Sigmoid colon (tissue), 7 donors: ENCODE measurements at regions of chr1 and their contacts with region 1.

Region 1: DNA sequence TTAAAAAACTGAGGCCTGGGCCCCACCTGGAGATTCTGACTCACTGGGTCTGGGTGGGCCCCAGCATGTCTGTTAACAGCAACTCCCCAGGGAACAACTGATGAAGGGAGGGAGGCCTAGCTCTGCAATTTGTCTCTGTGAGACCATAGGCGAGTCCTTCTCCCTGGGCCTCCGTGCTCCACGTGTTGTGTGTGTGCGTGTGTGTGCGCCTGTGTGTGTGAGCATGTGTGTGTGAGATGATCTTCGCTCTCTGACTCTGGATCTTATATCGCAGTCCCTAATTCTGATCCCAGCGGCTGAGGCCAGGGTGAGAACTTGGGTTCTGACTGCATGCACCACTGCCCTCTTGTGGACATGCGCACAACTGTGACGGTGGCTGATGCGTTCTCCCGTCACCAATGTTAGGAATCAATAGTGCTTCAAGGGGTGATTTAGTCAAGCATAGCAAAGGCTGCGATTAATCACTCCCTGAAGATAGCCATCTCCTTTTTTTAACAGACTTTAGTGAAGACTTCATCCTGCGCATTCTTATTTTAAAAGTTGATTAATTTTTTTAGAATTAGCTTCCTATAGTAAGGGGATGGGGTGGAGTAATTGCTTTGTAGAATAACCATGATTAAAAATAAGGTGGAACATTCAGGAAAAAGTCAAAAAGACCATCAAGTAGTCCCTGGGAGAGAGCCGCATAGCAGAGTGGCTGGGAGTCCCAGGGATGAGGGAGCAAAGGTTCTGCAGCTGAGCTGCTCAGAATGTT is 62.4 kb upstream of the USP24 start:
- DNase-seq: peak; percentile 90
- H3K4me3 ChIP-seq: no peak overlapping the region
- H3K27ac ChIP-seq: no peak overlapping the region
- H3K4me1 ChIP-seq: peaks cover 0 to 18% (median 10%) of the 10 kb centered on the region in 4 donors
- H3K27me3 ChIP-seq: no peaks in the 10 kb centered on the region
- CTCF ChIP-seq: peak; percentile 69 to 90 (median 84)
- EP300 ChIP-seq: no peak
- POLR2A ChIP-seq: no peak

Region 2: GRCh38 chr1:55064071-55064581 is 213.4 kb before region 1 on chr1:
- intact Hi-C with region 1: loop called (anchors 10 kb)
- DNase-seq: no peak
- H3K4me3 ChIP-seq: no peak overlapping the region
- H3K27ac ChIP-seq: peak overlapping the region; percentile 53 to 78 (median 74)
- H3K4me1 ChIP-seq: peaks cover 0 to 40% (median 37%) of the 10 kb centered on the region in 4 donors
- H3K27me3 ChIP-seq: no peaks in the 10 kb centered on the region
- CTCF ChIP-seq: no peak
- EP300 ChIP-seq: no peak
- POLR2A ChIP-seq: no peak

Region 3: DNA sequence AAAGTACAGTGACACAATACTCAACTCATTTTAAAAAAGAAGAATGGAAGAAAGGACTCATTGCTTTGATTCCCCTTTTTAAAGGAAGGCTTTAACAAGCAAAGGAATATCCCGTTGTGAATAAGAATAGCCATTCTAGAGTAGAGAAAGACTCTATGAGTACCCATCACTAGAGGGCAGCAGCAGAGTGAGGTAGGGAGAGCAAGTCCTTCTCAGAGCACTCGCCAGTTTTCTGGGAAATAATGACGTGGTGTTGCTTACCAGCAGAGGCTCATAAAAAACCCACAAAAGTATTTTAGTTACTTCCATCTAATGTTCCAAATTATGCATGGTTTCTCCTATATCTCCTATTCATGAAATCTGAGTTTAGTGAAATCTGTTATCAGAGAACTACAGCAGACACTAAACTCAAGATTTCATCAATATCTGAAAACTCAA is 137.0 kb before region 1 on chr1:
- intact Hi-C with region 1: loop called (anchors 1 kb)
- DNase-seq: peak; percentile 87
- H3K4me3 ChIP-seq: no peak overlapping the region
- H3K27ac ChIP-seq: peak overlapping the region in 2 of 4 donors; percentile 42 to 56
- H3K4me1 ChIP-seq: peaks cover 0 to 11% (median 0%) of the 10 kb centered on the region in 4 donors
- H3K27me3 ChIP-seq: no peaks in the 10 kb centered on the region
- CTCF ChIP-seq: peak; percentile 67 to 82 (median 78)
- EP300 ChIP-seq: peak in 1 of 4 donors; percentile 28
- POLR2A ChIP-seq: no peak

Region 4: GRCh38 chr1:55215256-55216021 is 62.1 kb before region 1 on chr1 and contains the start of gene USP24:
- intact Hi-C with region 1: loop called (anchors 5 kb)
- DNase-seq: peak; percentile 83
- H3K4me3 ChIP-seq: peak within 1 kb of the TSS; percentile 61 to 93 (median 72)
- H3K27ac ChIP-seq: peak within 1 kb of the TSS; percentile 94 to 97 (median 96)
- H3K4me1 ChIP-seq: peaks cover 0 to 46% (median 32%) of the 10 kb centered on the region in 4 donors
- H3K27me3 ChIP-seq: no peaks in the 10 kb centered on the region
- CTCF ChIP-seq: no peak
- EP300 ChIP-seq: no peak
- POLR2A ChIP-seq: peak; percentile 70 to 83
- total RNA-seq, gene USP24: 46.4 to 66.2 (median 53.6) TPM